Panc1 (cell line): ENCODE measurements at regions of chr1 and their contacts with region 1.

Region 1: DNA sequence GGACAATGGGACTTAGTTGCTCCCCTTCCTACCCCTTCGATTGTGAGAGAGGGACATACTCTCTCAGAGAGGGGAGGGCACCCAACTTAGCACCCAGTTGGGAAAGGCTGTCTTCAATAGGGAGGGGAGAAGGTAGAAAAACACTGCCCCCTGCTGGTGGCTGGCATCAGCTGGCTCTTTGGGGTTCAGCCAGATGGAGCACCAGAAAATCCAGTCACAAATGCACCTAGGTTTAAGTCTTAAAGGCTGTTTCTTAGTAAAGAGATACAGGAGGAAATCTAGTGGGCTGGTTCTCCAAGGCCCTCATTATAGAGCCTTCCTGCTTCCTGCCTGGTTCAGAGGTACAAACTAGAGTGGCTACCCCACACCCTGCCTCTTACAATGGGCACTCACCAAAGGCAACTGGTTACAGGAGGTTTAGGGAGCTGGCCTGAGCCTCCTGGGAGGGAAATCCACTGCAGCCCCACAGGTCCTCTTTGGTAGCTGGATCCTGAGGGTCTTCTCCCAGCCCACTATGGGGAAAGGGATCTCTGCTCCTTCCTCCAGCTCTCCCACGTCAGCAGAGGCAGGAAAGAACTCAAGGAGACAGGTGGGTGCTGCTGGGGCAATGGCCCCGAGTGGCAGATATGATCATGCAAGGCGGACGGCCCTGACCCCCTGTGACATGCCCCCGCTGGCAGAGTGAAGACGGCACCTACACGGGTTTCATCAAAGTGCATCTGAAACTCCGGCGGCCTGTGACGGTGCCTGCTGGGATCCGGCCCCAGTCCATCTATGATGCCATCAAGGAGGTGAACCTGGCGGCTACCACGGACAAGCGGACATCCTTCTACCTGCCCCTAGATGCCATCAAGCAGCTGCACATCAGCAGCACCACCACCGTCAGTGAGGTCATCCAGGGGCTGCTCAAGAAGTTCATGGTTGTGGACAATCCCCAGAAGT is 28.3 kb downstream of the EIF2D start:
- DNase-seq: peak; percentile 59
- ATAC-seq: peak; percentile 91
- H3K4me3 ChIP-seq: no peak overlapping the region
- H3K27ac ChIP-seq: no peak overlapping the region
- H3K4me1 ChIP-seq: no peaks in the 10 kb centered on the region
- H3K27me3 ChIP-seq: no peaks in the 10 kb centered on the region
- CTCF ChIP-seq: peak; percentile 90

Region 2: GRCh38 chr1:205826016-205826806 is 757.8 kb before region 1 on chr1:
- CTCF ChIA-PET with region 1: no interaction called
- POLR2A ChIA-PET with region 1: no interaction called
- in situ Hi-C with region 1: no loop called
- intact Hi-C with region 1: no loop called
- DNase-seq: no peak
- ATAC-seq: no peak
- H3K4me3 ChIP-seq: no peak overlapping the region
- H3K27ac ChIP-seq: no peak overlapping the region
- H3K4me1 ChIP-seq: no peaks in the 10 kb centered on the region
- H3K27me3 ChIP-seq: peaks cover 2% of the 10 kb centered on the region; the same call in 1 of the 2 replicates
- CTCF ChIP-seq: no peak

Region 3: GRCh38 chr1:206489980-206490770 is 93.8 kb before region 1 on chr1:
- CTCF ChIA-PET with region 1: interaction called, 16 read pairs
- POLR2A ChIA-PET with region 1: no interaction called
- in situ Hi-C with region 1: no loop called
- intact Hi-C with region 1: loop called (anchors 2 kb)
- DNase-seq: peak; percentile 33
- ATAC-seq: peak; percentile 96
- H3K4me3 ChIP-seq: no peak overlapping the region
- H3K27ac ChIP-seq: no peak overlapping the region
- H3K4me1 ChIP-seq: no peaks in the 10 kb centered on the region
- H3K27me3 ChIP-seq: no peaks in the 10 kb centered on the region
- CTCF ChIP-seq: peak; percentile 97

Region 4: DNA sequence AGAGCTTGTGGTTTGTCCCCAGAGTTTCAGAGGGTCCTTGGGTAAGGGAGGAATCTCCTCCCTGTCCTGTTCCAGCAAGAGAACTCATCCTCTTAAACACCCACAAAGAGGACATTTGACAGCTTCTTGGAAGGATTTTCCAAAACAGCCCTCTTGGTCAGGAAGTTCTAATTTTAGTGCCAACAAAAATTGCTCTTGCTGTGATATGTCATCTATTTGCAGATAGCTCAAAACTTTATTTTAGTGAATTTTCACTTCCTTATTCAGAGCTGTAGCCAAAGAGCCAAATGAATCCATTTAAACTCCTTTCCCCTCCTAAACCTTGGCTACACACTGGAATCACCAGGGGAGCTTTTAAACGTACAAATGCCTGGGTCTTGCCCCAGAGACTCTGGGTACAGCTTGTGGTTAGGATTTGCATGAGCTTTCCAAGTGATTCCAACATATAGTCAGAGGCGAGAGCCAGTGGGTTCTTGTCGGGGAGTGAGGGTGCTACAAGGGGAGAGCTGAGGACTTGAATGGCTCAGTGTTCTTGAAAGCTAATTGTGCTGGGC is 88.4 kb before region 1 on chr1:
- CTCF ChIA-PET with region 1: interaction called, 16 read pairs
- POLR2A ChIA-PET with region 1: no interaction called
- in situ Hi-C with region 1: no loop called
- intact Hi-C with region 1: loop called (anchors 2 kb)
- DNase-seq: no peak
- ATAC-seq: no peak
- H3K4me3 ChIP-seq: no peak overlapping the region
- H3K27ac ChIP-seq: no peak overlapping the region
- H3K4me1 ChIP-seq: no peaks in the 10 kb centered on the region
- H3K27me3 ChIP-seq: no peaks in the 10 kb centered on the region
- CTCF ChIP-seq: no peak

Region 5: DNA sequence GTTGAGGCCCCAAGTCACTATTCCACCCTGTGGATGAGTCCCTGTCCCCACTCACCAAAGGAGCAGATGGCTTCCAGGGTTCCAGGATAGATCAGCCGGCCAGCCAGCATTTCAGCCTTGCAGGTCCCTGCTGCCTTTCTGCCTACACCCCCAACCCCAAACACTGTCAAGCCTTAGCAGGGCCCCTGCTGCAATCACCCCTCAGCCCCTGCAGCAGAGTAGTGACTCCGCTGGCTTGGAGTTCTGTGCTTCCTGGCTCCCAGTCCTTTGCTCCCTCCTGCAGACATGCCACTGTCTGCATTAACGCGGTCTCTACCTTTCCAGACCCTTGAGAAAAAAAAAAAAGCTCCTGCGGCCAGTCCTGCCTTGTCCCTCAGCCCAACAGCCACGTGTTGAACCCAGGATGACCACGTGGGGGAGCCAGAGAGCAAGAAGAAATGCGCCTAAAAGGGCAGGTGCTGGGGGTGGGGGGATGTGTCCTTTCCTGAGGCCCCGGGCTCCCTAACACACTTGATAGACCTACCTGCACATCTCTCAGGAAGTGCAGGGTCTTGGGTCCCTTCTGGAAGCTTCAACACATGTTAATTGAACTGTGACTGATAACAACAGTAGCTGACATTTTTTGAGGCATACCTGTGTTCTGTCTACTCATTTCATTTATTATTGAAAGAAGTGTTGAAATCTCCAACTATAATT is 39.3 kb before region 1 on chr1:
- CTCF ChIA-PET with region 1: interaction called, 16 read pairs
- POLR2A ChIA-PET with region 1: no interaction called
- in situ Hi-C with region 1: no loop called
- intact Hi-C with region 1: loop called (anchors 2 kb)
- DNase-seq: peak; percentile 28
- ATAC-seq: peak; percentile 91
- H3K4me3 ChIP-seq: no peak overlapping the region
- H3K27ac ChIP-seq: no peak overlapping the region
- H3K4me1 ChIP-seq: no peaks in the 10 kb centered on the region
- H3K27me3 ChIP-seq: peaks cover 2% of the 10 kb centered on the region; the same call in 1 of the 2 replicates
- CTCF ChIP-seq: peak; percentile 95

Region 6: GRCh38 chr1:206612129-206612876 is 28.3 kb after region 1 on chr1 and contains the start of gene EIF2D:
- CTCF ChIA-PET with region 1: interaction called, 11 read pairs
- POLR2A ChIA-PET with region 1: interaction called, 4 read pairs
- in situ Hi-C with region 1: no loop called
- intact Hi-C with region 1: no loop called
- DNase-seq: peak; percentile 66
- ATAC-seq: peak; percentile 98
- H3K4me3 ChIP-seq: peak within 1 kb of the TSS; percentile 89
- H3K27ac ChIP-seq: peak within 1 kb of the TSS; percentile 95
- H3K4me1 ChIP-seq: 0 out of 2 replicates have a peak, but pooled peaks cover 5% of the 10 kb centered on the region
- H3K27me3 ChIP-seq: no peaks in the 10 kb centered on the region; the same call in 1 of the 2 replicates
- CTCF ChIP-seq: peak; percentile 99
- total RNA-seq, gene EIF2D: 28.7 TPM